Mammary epithelial cell (primary cell): ENCODE measurements at regions of chr3 and their contacts with region 1.

Region 1: GRCh38 chr3:137946345-137946973 is 63.5 kb upstream of the CLDN18 start:
- DNase-seq: peak; percentile 58
- H3K4me3 ChIP-seq: no peak overlapping the region
- H3K27ac ChIP-seq: no peak overlapping the region
- H3K4me1 ChIP-seq: no peaks in the 10 kb centered on the region
- H3K27me3 ChIP-seq: no peaks in the 10 kb centered on the region
- CTCF ChIP-seq: peak; percentile 57 to 71

Region 2: DNA sequence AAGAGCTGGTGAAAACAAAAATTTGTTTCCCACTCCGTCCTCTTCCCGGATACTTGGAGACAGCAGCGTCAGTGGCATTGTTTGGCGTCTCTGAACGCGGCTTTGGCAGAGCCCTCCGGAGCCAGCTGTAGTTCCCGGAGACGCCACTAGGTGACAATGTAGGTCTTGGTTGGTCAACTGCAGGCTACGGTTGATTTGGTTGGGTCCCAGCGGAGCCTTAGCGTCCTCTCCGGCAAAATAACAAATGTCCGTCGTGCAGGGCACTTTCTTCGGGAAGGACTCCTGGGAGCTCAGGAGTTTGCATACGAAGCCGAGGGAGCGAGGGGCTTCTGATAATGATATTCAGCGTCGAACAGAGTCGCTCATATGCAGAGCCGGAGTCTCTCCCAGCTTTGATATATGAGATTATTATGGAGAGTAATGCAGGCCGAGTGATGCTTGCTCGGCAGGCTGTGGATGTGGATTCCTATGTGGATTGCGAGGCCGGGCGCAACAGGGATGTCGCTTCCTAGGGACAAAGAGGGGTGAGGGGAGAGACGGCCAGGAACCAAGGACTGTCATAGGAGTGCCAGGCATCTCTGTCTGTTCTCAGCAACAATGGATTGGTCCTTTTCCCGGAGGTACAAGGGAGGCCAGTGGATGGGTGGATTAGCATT is 913.9 kb before region 1 on chr3:
- CTCF ChIA-PET with region 1: no interaction called
- dilution Hi-C with region 1: no loop called
- in situ Hi-C with region 1: no loop called
- intact Hi-C with region 1: loop called (anchors 5 kb)
- DNase-seq: peak; percentile 65
- H3K4me3 ChIP-seq: peak overlapping the region in 2 of 3 experiments; percentile 17 to 33
- H3K27ac ChIP-seq: no peak overlapping the region
- H3K4me1 ChIP-seq: no peaks in the 10 kb centered on the region
- H3K27me3 ChIP-seq: no peaks in the 10 kb centered on the region
- CTCF ChIP-seq: peak; percentile 96 to 97

Region 3: GRCh38 chr3:137121704-137122314 is 824.6 kb before region 1 on chr3:
- CTCF ChIA-PET with region 1: no interaction called
- dilution Hi-C with region 1: no loop called
- in situ Hi-C with region 1: loop called (anchors 25 kb)
- intact Hi-C with region 1: loop called (anchors 5 kb)
- DNase-seq: peak; percentile 26
- H3K4me3 ChIP-seq: no peak overlapping the region
- H3K27ac ChIP-seq: no peak overlapping the region
- H3K4me1 ChIP-seq: no peaks in the 10 kb centered on the region
- H3K27me3 ChIP-seq: no peaks in the 10 kb centered on the region
- CTCF ChIP-seq: peak; percentile 82 to 89

Region 4: GRCh38 chr3:137709011-137709601 is 237.4 kb before region 1 on chr3:
- CTCF ChIA-PET with region 1: no interaction called
- dilution Hi-C with region 1: no loop called
- in situ Hi-C with region 1: no loop called
- intact Hi-C with region 1: loop called (anchors 1 kb)
- DNase-seq: peak; percentile 6
- H3K4me3 ChIP-seq: no peak overlapping the region
- H3K27ac ChIP-seq: no peak overlapping the region
- H3K4me1 ChIP-seq: no peaks in the 10 kb centered on the region
- H3K27me3 ChIP-seq: no peaks in the 10 kb centered on the region
- CTCF ChIP-seq: peak; percentile 60 to 73

Region 5: GRCh38 chr3:138051946-138052802 is 105.7 kb after region 1 on chr3:
- CTCF ChIA-PET with region 1: no interaction called
- dilution Hi-C with region 1: no loop called
- in situ Hi-C with region 1: no loop called
- intact Hi-C with region 1: loop called (anchors 1 kb)
- DNase-seq: peak; percentile 32
- H3K4me3 ChIP-seq: no peak overlapping the region
- H3K27ac ChIP-seq: no peak overlapping the region
- H3K4me1 ChIP-seq: no peaks in the 10 kb centered on the region
- H3K27me3 ChIP-seq: no peaks in the 10 kb centered on the region
- CTCF ChIP-seq: peak; percentile 80 to 83